ENCODE measurements at regions of chr10 and their contacts with region 1.

Region 1: DNA sequence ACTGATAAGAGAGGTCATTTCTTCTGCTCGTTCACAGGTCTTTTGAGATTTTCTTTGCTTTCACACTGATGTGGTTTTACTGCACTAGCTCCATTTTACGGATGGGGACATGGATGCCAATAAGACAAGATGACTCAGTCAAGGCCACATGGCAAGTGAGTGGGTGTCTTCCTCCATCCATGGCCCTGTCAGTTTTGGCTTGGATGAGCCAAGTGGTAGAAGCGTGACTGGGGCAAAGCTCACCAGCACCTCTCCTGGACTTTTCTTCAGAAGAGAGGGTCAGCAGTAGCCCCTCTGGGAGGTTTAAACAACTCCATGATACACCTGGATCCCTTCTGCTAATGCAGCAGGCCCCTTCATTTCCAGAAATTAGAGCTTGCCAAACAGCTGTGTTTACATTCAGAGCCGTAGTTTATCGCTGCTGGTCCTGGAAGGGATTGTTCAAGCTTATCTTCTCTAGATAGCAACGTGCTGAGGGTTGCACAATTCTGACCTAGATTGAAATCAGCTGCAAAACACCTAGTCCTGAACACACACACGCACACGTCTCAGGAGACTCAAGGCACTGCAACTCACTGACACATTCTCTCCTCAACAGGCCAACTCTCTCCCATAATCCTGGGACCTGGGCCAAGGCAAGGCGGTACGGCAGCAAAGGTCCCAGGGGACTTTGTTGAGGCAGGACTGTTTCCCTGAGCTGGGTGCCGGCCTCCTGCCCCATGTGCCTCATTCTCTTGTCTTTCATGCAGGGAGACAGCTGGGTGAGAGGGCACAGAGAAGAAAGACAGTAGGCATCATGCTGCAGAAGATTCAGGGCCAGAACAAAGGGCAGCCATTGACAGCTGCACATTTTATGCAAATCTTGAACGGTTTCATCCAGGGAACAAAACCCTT is 14.2 kb upstream of the PDCD4 start:
- DNase-seq: peak; percentile 51
- H3K4me3 Mint-ChIP-seq: peak overlapping the region; percentile 6
- H3K27ac Mint-ChIP-seq: peak overlapping the region; percentile 83
- H3K4me1 Mint-ChIP-seq: peaks cover 81% of the 10 kb centered on the region
- H3K27me3 Mint-ChIP-seq: no peaks in the 10 kb centered on the region

Region 2: DNA sequence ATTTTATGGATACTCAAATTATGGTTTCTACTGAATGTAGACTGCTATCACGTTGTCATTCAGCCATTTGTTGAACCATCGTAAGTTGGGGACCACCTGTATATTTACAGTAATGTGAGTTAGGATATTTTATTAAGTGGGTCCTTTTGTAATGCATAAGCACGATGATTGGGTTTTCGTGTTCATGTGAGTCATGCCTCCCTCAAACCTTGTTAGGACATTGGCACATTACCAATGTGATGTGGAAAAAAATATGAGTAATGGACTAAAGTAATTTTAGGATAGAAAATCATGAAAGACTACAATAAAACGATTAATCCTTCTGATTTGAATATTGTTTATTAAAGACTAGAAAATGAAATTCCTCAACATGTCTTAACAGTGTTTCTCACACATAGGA is 281.3 kb before region 1 on chr10:
- CTCF ChIA-PET with region 1: no interaction called
- POLR2A ChIA-PET with region 1: no interaction called
- DNase-seq: no peak
- H3K4me3 Mint-ChIP-seq: no peak overlapping the region
- H3K27ac Mint-ChIP-seq: no peak overlapping the region
- H3K4me1 Mint-ChIP-seq: peaks cover 41% of the 10 kb centered on the region
- H3K27me3 Mint-ChIP-seq: no peaks in the 10 kb centered on the region

Region 3: DNA sequence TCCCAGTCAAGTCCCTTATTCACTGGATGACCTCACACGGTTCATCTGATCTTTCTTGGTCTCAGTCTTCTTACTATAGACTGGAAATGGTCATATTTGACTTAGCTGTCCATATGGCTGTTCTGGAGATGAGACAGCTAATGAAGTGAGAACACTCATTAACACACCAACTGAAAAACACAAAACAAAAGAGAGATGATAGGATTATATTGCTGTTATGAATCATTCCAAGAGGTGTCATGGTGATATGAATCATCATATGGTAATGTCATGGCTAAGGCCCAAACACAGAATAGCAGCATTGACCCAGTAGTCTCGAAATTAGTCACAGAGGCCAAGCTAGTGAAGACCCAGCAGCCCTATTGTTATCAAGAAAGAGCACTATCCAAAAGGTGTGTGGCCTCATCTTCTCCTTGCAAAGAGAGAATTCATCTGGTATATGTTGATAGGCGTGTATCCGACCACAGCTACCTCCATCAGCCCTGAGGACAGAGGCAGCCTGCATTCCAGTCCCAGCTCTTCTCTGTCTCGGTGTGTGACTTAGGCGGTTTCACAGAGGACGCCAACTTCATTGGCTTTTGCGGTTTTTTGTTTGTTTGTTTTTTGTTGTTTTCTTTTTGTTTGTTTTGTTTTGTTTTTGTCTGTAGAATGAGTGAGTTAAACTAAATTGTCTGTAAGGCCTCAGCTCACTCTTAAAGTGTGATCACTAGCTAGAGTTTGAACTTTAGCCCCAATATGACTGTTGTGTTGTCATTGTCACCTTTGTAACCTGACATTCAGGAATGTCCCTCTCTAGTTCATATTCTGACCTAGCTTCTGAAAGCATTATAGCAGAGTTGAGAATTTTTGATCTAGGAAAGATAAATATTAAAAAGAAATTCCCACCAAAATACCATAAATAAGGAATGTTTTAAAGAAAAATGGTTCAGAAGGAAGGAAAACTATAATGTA is 83.2 kb before region 1 on chr10:
- CTCF ChIA-PET with region 1: no interaction called
- POLR2A ChIA-PET with region 1: interaction called, 11 read pairs
- DNase-seq: peak; percentile 64
- H3K4me3 Mint-ChIP-seq: no peak overlapping the region
- H3K27ac Mint-ChIP-seq: peak overlapping the region; percentile 89
- H3K4me1 Mint-ChIP-seq: peaks cover 23% of the 10 kb centered on the region
- H3K27me3 Mint-ChIP-seq: peaks cover 2% of the 10 kb centered on the region

Region 4: DNA sequence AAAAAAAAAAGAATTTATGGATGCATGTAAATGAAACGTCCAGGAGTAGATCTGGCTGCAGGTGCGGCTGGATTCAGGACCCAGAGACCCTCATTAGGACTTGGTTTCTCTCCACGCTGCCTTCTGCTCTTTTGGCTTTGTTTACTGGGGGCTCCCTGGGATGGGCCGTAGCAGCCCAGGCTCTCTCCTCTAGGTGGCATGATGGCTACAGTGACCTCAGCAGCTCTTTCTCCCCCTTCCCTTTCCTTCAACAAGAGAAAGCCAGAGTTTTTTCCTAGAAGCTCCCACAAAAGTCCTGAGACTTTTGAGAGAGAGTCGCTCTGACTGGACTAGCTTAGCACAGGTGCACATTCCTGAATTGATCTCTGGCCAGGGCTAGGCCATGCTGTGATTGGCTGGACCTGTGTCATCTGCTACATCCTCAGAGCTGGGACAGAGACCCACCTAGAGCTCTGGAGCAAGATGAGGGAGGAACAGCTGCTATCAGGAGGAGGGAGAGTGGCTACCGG is 53.6 kb before region 1 on chr10:
- CTCF ChIA-PET with region 1: interaction called, 9 read pairs
- POLR2A ChIA-PET with region 1: interaction called, 17 read pairs
- DNase-seq: peak; percentile 31
- H3K4me3 Mint-ChIP-seq: no peak overlapping the region
- H3K27ac Mint-ChIP-seq: peak overlapping the region; percentile 20
- H3K4me1 Mint-ChIP-seq: peaks cover 35% of the 10 kb centered on the region
- H3K27me3 Mint-ChIP-seq: peaks cover 3% of the 10 kb centered on the region

Region 5: DNA sequence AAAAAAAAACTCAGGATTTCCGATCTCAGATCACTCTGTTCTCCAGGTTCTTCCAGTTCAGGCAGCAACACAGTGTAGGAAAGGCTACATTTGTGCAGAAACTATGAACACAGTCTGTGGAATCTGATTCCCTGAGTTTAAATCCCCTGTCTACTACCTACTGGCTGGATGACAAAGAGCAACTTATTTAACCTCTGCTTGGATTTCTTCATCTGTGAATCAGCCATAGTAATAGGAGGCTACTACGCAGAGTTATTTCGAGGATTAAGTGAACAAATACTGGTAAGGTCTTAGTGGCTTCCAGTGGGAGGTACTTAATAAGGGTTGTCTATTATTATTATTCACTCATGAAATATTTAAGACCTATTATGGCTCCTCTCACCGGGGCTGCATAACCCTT is 30.1 kb before region 1 on chr10:
- CTCF ChIA-PET with region 1: no interaction called
- POLR2A ChIA-PET with region 1: no interaction called
- DNase-seq: no peak
- H3K4me3 Mint-ChIP-seq: no peak overlapping the region
- H3K27ac Mint-ChIP-seq: no peak overlapping the region
- H3K4me1 Mint-ChIP-seq: no peaks in the 10 kb centered on the region
- H3K27me3 Mint-ChIP-seq: no peaks in the 10 kb centered on the region

Region 6: GRCh38 chr10:110843031-110843430 is 14.5 kb before region 1 on chr10:
- CTCF ChIA-PET with region 1: interaction called, 5 read pairs
- POLR2A ChIA-PET with region 1: interaction called, 16 read pairs
- DNase-seq: peak; percentile 65
- H3K4me3 Mint-ChIP-seq: no peak overlapping the region
- H3K27ac Mint-ChIP-seq: peak overlapping the region; percentile 17
- H3K4me1 Mint-ChIP-seq: peaks cover 31% of the 10 kb centered on the region
- H3K27me3 Mint-ChIP-seq: no peaks in the 10 kb centered on the region

Region 7: DNA sequence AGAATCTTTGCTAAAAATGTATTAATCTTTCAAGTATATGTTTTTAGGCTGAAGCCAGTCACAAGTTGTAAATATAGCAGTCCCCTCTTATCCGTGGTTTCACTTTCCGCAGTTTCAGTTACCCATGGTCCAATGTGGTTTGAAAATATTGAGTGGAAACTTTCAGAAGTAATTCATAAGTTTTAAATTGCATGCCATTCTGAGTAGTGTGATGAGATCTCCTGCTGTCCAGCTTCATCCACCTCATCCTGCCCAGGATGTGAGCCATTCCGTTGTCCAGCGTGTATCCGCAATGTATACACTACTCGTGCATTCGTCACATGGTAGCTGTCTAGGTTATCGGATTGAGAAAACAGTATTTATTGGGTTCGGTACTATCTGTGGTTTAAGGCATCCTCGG is 26.4 kb after region 1 on chr10:
- CTCF ChIA-PET with region 1: no interaction called
- POLR2A ChIA-PET with region 1: interaction called, 10 read pairs
- DNase-seq: no peak
- H3K4me3 Mint-ChIP-seq: peak overlapping the region; percentile 60
- H3K27ac Mint-ChIP-seq: peak overlapping the region; percentile 40
- H3K4me1 Mint-ChIP-seq: peaks cover 41% of the 10 kb centered on the region
- H3K27me3 Mint-ChIP-seq: no peaks in the 10 kb centered on the region

Measured in activated CD4-positive, alpha-beta memory T cell treated with anti-CD3 and anti-CD28 coated beads, Interleukin-2, amount 10 ng/mL, durations not matched to agents 7 days and 5 days (primary cell).